ENCODE measurements at regions of chr10 and their contacts with region 1.

Region 1: GRCh38 chr10:30935078-30935477 is 96.6 kb downstream of the ZNF438 start:
- DNase-seq: no peak
- ATAC-seq: no peak
- H3K4me3 ChIP-seq: no peak overlapping the region
- H3K4me3 Mint-ChIP-seq: no peak overlapping the region
- H3K27ac ChIP-seq: no peak overlapping the region
- H3K27ac Mint-ChIP-seq: no peak overlapping the region
- H3K4me1 ChIP-seq: no peaks in the 10 kb centered on the region
- H3K4me1 Mint-ChIP-seq: peaks cover 2 to 20% (median 18%) of the 10 kb centered on the region in 7 donors
- H3K27me3 ChIP-seq: no peaks in the 10 kb centered on the region
- H3K27me3 Mint-ChIP-seq: no peaks in the 10 kb centered on the region

Region 2: GRCh38 chr10:30687698-30688219 is 247.3 kb before region 1 on chr10:
- CTCF ChIA-PET with region 1: no interaction called
- POLR2A ChIA-PET with region 1: no interaction called
- intact Hi-C with region 1: no loop called
- DNase-seq: peak; percentile 53 to 80 (median 67)
- ATAC-seq: peak; percentile 84
- H3K4me3 ChIP-seq: no peak overlapping the region
- H3K4me3 Mint-ChIP-seq: no peak overlapping the region
- H3K27ac ChIP-seq: no peak overlapping the region
- H3K27ac Mint-ChIP-seq: peak overlapping the region in 1 of 9 donors; percentile 47
- H3K4me1 ChIP-seq: no peaks in the 10 kb centered on the region
- H3K4me1 Mint-ChIP-seq: peaks cover 0 to 39% (median 2%) of the 10 kb centered on the region in 7 donors
- H3K27me3 ChIP-seq: no peaks in the 10 kb centered on the region
- H3K27me3 Mint-ChIP-seq: peaks cover 11 to 38% (median 28%) of the 10 kb centered on the region in 5 donors

Region 3: DNA sequence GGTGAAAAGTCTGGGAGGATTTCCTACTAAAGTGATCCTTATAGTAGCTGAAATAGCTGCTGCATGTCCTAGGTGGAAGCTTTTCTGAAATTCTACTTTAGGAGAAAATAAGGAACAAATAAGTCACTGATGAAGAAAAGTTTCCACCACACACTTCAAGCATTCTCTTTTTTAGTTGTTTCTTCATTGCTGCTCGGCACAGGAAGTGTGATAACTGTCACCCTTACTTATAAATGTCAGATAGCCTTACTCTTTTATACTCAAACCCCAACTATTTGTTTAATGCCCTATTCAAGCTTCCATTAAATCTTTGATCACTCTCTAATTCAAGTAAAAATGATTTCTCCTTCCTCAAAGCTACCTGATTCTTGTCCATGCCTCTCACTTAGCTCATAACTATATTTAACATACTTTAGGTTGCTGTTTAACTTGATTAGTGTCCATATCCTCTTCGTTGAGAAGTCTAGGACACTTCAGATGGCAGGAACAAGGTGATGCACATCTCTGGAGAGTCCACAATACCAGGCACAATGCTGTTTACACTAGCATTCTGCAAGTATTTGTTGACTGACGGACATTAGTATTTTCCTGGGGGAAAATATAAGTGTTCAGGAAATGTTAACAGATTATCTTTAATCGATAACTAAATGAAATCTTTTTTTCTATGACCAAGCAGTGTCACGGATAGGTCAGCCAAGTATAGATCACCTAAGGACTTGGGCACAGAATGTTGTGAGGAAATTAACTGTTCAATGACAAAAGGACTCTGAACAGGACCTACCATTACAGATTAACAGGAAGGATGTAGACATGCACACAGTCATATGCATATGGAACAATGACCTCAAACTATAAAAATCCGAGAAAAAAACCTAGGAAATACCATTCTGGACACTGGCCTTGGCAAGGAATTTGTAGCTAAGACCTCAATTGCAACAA is 29.2 kb after region 1 on chr10:
- CTCF ChIA-PET with region 1: no interaction called
- POLR2A ChIA-PET with region 1: no interaction called
- intact Hi-C with region 1: no loop called
- DNase-seq: no peak
- ATAC-seq: no peak
- H3K4me3 ChIP-seq: no peak overlapping the region
- H3K4me3 Mint-ChIP-seq: peak overlapping the region in 1 of 10 donors; percentile 32
- H3K27ac ChIP-seq: no peak overlapping the region
- H3K27ac Mint-ChIP-seq: peak overlapping the region in 6 of 9 donors; percentile 0 to 74 (median 47)
- H3K4me1 ChIP-seq: no peaks in the 10 kb centered on the region
- H3K4me1 Mint-ChIP-seq: peaks cover 7 to 21% (median 14%) of the 10 kb centered on the region in 7 donors
- H3K27me3 ChIP-seq: no peaks in the 10 kb centered on the region
- H3K27me3 Mint-ChIP-seq: no peaks in the 10 kb centered on the region

Region 4: GRCh38 chr10:30980951-30981616 is 46.0 kb after region 1 on chr10:
- CTCF ChIA-PET with region 1: no interaction called
- POLR2A ChIA-PET with region 1: no interaction called
- intact Hi-C with region 1: loop called in 1 of 2 experiments (anchors 10 kb)
- DNase-seq: no peak
- ATAC-seq: no peak
- H3K4me3 ChIP-seq: no peak overlapping the region
- H3K4me3 Mint-ChIP-seq: no peak overlapping the region
- H3K27ac ChIP-seq: no peak overlapping the region
- H3K27ac Mint-ChIP-seq: no peak overlapping the region
- H3K4me1 ChIP-seq: no peaks in the 10 kb centered on the region
- H3K4me1 Mint-ChIP-seq: peaks cover 0 to 12% (median 0%) of the 10 kb centered on the region in 7 donors
- H3K27me3 ChIP-seq: no peaks in the 10 kb centered on the region
- H3K27me3 Mint-ChIP-seq: no peaks in the 10 kb centered on the region

Measured in naive thymus-derived CD4-positive, alpha-beta T cell (primary cell).